ENCODE measurements at regions of chr18 and their contacts with region 1.

Region 1: GRCh38 chr18:21111341-21112139 is at the start of gene ROCK1:
- DNase-seq: peak; percentile 98 to 100 (median 99)
- ATAC-seq: peak; percentile 81
- H3K4me3 ChIP-seq: peak within 1 kb of the TSS; percentile 88
- H3K4me3 Mint-ChIP-seq: no peak within 1 kb of the TSS
- H3K27ac ChIP-seq: peak within 1 kb of the TSS; percentile 91 to 94
- H3K27ac Mint-ChIP-seq: peak within 1 kb of the TSS; percentile 87
- H3K4me1 ChIP-seq: peaks cover 13% of the 10 kb centered on the region
- H3K4me1 Mint-ChIP-seq: peaks cover 11% of the 10 kb centered on the region
- H3K27me3 ChIP-seq: no peaks in the 10 kb centered on the region
- H3K27me3 Mint-ChIP-seq: no peaks in the 10 kb centered on the region
- CTCF ChIP-seq: no peak
- total RNA-seq, gene ROCK1: 85.5 to 91.2 TPM

Region 2: GRCh38 chr18:20971886-20972267 is 139.7 kb before region 1 on chr18:
- CTCF ChIA-PET with region 1: no interaction called
- POLR2A ChIA-PET with region 1: interaction called, 3 read pairs
- intact Hi-C with region 1: loop called in 1 of 2 experiments (anchors 10 kb)
- DNase-seq: peak in 3 of 14 experiments; percentile 29 to 33 (median 29)
- ATAC-seq: peak; percentile 44
- H3K4me3 ChIP-seq: no peak overlapping the region
- H3K4me3 Mint-ChIP-seq: no peak overlapping the region
- H3K27ac ChIP-seq: no peak overlapping the region
- H3K27ac Mint-ChIP-seq: no peak overlapping the region
- H3K4me1 ChIP-seq: no peaks in the 10 kb centered on the region
- H3K4me1 Mint-ChIP-seq: peaks cover 5% of the 10 kb centered on the region
- H3K27me3 ChIP-seq: no peaks in the 10 kb centered on the region
- H3K27me3 Mint-ChIP-seq: no peaks in the 10 kb centered on the region
- CTCF ChIP-seq: peak; percentile 29

Region 3: DNA sequence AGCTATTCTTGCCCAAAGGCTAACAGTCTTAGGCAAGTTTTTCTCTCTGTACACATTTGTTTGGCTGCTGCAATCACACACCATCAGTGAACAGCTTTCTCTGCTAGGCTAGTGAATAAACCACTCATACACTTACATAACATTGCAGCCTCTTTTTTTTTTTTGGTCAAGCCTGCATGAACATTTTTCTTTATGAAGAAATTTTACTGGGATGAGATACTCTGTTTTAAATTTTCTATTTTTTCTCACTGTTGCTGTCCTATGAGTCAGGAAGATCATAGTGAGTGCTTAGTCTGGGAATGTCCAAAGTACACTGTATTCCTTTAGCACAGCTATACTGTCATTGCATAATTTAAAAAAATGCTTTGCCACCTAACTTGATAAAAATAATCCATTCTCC is 58.4 kb before region 1 on chr18:
- CTCF ChIA-PET with region 1: no interaction called
- POLR2A ChIA-PET with region 1: interaction called, 6 read pairs
- intact Hi-C with region 1: loop called in 1 of 2 experiments (anchors 2 kb)
- DNase-seq: no peak
- ATAC-seq: no peak
- H3K4me3 ChIP-seq: no peak overlapping the region
- H3K4me3 Mint-ChIP-seq: no peak overlapping the region
- H3K27ac ChIP-seq: no peak overlapping the region
- H3K27ac Mint-ChIP-seq: peak overlapping the region; percentile 9
- H3K4me1 ChIP-seq: peaks cover 7% of the 10 kb centered on the region
- H3K4me1 Mint-ChIP-seq: peaks cover 49% of the 10 kb centered on the region
- H3K27me3 ChIP-seq: no peaks in the 10 kb centered on the region
- H3K27me3 Mint-ChIP-seq: no peaks in the 10 kb centered on the region
- CTCF ChIP-seq: no peak

Region 4: GRCh38 chr18:21099442-21099841 is 12.1 kb before region 1 on chr18:
- CTCF ChIA-PET with region 1: no interaction called
- POLR2A ChIA-PET with region 1: interaction called, 10 read pairs
- intact Hi-C with region 1: loop called in 1 of 2 experiments (anchors 1 kb)
- DNase-seq: no peak
- ATAC-seq: no peak
- H3K4me3 ChIP-seq: no peak overlapping the region
- H3K4me3 Mint-ChIP-seq: peak overlapping the region; percentile 42
- H3K27ac ChIP-seq: no peak overlapping the region
- H3K27ac Mint-ChIP-seq: no peak overlapping the region
- H3K4me1 ChIP-seq: peaks cover 28% of the 10 kb centered on the region
- H3K4me1 Mint-ChIP-seq: peaks cover 82% of the 10 kb centered on the region
- H3K27me3 ChIP-seq: no peaks in the 10 kb centered on the region
- H3K27me3 Mint-ChIP-seq: no peaks in the 10 kb centered on the region
- CTCF ChIP-seq: no peak

Region 5: DNA sequence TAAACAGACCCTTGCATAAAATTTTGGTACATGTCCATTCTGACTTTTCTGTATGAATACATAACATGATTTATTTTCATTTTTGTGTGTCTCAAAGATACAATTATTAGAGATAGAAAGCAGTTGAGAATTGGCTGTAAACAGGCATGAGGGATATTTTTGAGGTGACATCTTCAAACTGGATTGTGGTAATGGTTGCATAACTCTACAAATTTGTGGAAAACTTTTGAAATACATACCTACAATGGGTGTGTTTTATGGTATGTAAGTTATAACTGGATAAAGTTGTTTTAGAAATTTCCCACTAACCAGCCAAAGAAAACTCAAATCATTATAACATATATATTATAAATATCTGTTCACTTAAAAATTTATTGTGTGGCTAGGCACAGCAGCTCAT is 170.1 kb after region 1 on chr18:
- CTCF ChIA-PET with region 1: no interaction called
- POLR2A ChIA-PET with region 1: no interaction called
- intact Hi-C with region 1: no loop called
- DNase-seq: no peak
- ATAC-seq: no peak
- H3K4me3 ChIP-seq: no peak overlapping the region
- H3K4me3 Mint-ChIP-seq: no peak overlapping the region
- H3K27ac ChIP-seq: no peak overlapping the region
- H3K27ac Mint-ChIP-seq: no peak overlapping the region
- H3K4me1 ChIP-seq: no peaks in the 10 kb centered on the region
- H3K4me1 Mint-ChIP-seq: no peaks in the 10 kb centered on the region
- H3K27me3 ChIP-seq: peaks cover 0 to 5% of the 10 kb centered on the region in 2 experiments
- H3K27me3 Mint-ChIP-seq: peaks cover 22% of the 10 kb centered on the region
- CTCF ChIP-seq: no peak

Region 6: DNA sequence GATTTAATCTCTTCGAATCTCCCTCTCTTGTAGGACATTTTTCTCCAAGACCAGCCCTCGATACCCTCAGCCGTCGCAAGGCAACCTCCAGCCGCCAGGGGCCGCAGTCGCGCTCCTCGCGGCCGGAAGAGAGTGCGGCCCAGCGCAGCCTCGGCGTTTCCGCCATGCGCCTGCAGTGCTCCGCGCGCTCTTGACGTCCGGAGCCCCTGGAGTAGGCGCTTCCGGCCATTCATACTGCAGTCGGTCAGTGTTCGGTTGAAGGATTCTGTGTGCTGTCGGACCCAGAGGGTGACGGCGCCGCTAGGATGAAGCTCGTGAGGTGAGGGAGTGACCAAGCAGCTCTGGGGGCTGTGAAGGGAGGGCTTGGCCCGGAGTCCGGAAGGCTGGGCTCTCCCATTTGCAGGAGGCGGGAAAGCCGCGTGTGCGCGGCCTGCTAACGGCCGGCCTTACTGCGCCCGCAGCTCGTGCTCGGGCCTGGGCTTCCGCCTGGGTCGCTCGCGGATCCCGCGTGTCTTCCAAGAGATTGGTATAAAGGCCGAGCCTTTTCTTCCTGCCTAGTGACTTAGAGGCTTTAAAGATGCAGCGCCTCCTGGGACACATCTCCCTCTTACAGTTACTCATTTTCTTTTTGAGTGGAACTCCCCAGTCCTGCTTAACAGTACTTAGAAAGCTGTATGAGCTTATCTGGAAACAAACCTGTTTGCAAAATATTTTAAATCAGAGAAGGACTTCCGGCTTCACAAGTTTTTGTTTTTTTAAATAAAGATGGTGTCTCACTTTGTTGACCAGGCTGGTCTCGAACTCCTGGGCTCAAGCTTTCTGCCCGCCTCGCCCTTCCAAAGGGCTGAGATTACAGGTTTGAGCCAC is 500.8 kb after region 1 on chr18 and contains the start of gene SNRPD1:
- CTCF ChIA-PET with region 1: interaction called, 4 read pairs
- POLR2A ChIA-PET with region 1: no interaction called
- intact Hi-C with region 1: loop called in 1 of 2 experiments (anchors 5 kb)
- DNase-seq: peak; percentile 73 to 94 (median 86)
- ATAC-seq: peak; percentile 99
- H3K4me3 ChIP-seq: peak within 1 kb of the TSS; percentile 85
- H3K4me3 Mint-ChIP-seq: peak within 1 kb of the TSS; percentile 100
- H3K27ac ChIP-seq: peak within 1 kb of the TSS; percentile 86 to 90
- H3K27ac Mint-ChIP-seq: peak within 1 kb of the TSS; percentile 94
- H3K4me1 ChIP-seq: peaks cover 26% of the 10 kb centered on the region
- H3K4me1 Mint-ChIP-seq: peaks cover 44% of the 10 kb centered on the region
- H3K27me3 ChIP-seq: no peaks in the 10 kb centered on the region
- H3K27me3 Mint-ChIP-seq: no peaks in the 10 kb centered on the region
- CTCF ChIP-seq: peak; percentile 86
- total RNA-seq, gene SNRPD1: 35.7 to 38.9 TPM